Ovary (tissue), 10 donors: ENCODE measurements at regions of chr1 and their contacts with region 1.

Region 1: DNA sequence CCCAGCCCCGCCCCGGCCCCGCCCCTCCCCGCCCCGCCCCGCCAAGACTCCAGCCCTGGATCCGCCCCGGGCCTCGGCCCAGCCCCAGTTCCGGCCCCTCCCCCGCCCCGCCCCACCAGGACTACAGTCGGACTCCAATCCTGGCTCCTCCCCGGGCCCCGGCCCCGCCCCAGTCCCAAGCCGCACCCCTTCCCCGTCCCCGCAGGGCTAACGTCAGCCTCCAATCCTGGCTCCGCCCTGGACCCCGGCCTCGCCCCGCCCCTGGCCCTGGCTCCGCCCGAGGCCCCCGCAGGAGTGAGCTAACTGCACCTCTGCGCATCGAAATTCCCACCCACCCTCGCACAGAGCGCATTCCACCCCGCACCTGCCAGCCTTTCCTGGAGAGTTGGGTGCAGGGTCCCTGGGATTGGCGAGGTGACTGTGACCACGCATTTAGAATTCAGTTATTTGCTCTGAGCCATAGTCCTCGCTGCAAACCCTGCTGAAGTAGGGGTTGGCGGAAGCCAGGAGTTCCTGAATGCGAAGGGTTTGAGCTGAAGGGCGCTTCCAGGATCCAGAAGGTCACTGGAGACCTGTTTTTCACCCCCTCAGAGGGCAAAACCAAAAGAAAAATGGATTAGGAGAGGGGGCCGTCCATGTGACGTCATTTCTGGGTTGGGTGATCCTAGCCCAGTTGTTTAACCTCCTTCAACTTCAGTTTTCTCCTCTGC is 588 bp upstream of the IGSF8 start:
- DNase-seq: peak; percentile 98 to 99 (median 99)
- H3K4me3 ChIP-seq: peak overlapping the region; percentile 52
- H3K27ac ChIP-seq: peak overlapping the region; percentile 67 to 79
- H3K4me1 ChIP-seq: peaks cover 17% of the 10 kb centered on the region
- H3K27me3 ChIP-seq: no peaks in the 10 kb centered on the region
- CTCF ChIP-seq: no peak
- EP300 ChIP-seq: no peak
- POLR2A ChIP-seq: peak; percentile 71

Region 2: DNA sequence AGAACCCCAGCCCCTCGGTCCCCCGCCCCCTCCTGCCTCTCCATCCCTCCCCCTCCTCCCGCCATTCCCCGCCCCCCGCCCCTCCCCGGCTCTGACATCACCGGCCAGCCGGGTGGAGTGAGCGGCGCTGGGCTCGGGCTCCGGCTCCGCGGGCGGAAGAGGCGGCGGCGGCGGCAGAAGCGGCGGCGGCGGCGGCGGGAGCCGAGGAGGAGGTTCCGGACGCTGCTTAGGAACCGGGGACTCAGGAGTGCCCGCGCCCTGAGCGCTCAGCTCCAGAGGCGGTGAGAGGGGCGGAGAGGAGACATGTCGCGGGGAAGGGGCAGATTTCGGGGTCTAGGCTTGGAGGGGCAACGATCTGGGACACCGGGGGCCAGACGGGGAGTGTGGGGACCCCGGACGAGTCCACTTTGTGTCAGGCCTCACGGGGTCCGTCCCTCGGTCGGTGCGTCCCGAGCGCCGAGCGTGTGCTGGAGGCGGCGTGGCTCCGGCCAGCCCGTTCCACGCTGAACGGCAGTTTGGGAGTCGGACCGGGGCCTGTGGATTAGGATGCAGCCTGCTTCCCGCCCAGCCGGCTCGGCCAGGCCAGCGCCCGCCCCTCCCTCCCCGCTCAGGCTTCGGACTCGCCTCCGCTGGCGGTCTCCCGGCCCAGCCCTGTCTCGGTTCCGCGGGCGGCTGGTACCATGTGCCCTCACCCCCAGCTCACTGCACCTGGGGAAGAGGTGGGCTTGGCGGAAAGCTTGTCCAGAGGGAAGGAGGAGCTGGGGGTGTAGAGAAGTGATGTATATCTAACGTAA is 106.4 kb after region 1 on chr1 and contains the start of gene PEA15:
- intact Hi-C with region 1: loop called in 2 of 4 experiments (anchors 5 kb)
- DNase-seq: peak; percentile 79 to 88 (median 84)
- H3K4me3 ChIP-seq: peak within 1 kb of the TSS; percentile 92
- H3K27ac ChIP-seq: peak within 1 kb of the TSS; percentile 43 to 83
- H3K4me1 ChIP-seq: peaks cover 16% of the 10 kb centered on the region
- H3K27me3 ChIP-seq: no peaks in the 10 kb centered on the region
- CTCF ChIP-seq: no peak
- EP300 ChIP-seq: no peak
- POLR2A ChIP-seq: peak; percentile 80
- total RNA-seq, gene PEA15: 38.4 to 137 (median 135) TPM

Region 3: GRCh38 chr1:160219062-160219929 is 120.3 kb after region 1 on chr1:
- intact Hi-C with region 1: loop called in 1 of 4 experiments (anchors 5 kb)
- DNase-seq: peak in 4 of 5 donors; percentile 40 to 62 (median 56)
- H3K4me3 ChIP-seq: no peak overlapping the region
- H3K27ac ChIP-seq: peak overlapping the region in 1 of 2 donors; percentile 26
- H3K4me1 ChIP-seq: peaks cover 2% of the 10 kb centered on the region
- H3K27me3 ChIP-seq: no peaks in the 10 kb centered on the region
- CTCF ChIP-seq: peak; percentile 12 to 50 (median 33)
- EP300 ChIP-seq: no peak
- POLR2A ChIP-seq: no peak

Region 4: DNA sequence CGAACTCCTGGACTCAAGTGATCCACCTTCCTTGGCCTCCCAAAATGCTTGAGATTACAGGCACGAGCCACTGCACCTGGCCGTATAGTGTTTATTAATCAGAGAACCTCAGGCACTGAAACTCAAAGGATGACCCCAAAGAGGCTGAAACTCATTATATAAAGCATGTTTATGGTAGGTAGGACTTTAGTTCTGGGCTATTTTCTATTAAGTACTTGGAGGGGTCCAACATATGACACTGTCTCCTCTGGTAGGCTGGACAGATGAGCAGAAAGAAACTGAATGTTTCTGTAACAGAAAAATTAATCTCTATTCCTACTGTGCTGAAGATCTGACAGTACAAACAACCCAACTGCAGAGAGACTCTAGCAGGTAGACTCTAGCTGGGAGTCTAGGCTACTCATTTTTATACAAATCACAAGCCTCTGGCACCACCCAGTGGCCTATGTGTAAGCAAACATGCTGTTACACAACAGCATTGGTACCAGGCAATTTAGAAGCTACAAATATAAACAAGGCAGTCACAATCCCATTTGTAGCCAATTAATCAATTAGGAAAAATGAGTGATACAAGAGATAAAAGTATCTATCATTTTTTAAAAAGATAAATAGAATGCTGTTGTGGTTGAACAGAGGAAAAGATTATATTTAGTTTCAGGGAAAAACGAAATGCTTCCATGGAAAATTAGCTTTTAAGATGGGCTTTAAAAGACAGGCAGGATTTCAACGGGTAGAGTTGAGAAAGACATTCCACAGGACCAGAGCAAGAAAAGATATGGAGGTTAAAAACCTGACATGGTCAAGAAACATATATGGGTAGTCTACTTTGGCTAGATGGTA is 152.9 kb after region 1 on chr1:
- intact Hi-C with region 1: loop called in 2 of 4 experiments (anchors 10 kb)
- DNase-seq: peak; percentile 56 to 81 (median 64)
- H3K4me3 ChIP-seq: no peak overlapping the region
- H3K27ac ChIP-seq: no peak overlapping the region
- H3K4me1 ChIP-seq: peaks cover 1% of the 10 kb centered on the region
- H3K27me3 ChIP-seq: no peaks in the 10 kb centered on the region
- CTCF ChIP-seq: peak in 2 of 3 donors; percentile 67 to 80
- EP300 ChIP-seq: no peak
- POLR2A ChIP-seq: no peak

Region 5: DNA sequence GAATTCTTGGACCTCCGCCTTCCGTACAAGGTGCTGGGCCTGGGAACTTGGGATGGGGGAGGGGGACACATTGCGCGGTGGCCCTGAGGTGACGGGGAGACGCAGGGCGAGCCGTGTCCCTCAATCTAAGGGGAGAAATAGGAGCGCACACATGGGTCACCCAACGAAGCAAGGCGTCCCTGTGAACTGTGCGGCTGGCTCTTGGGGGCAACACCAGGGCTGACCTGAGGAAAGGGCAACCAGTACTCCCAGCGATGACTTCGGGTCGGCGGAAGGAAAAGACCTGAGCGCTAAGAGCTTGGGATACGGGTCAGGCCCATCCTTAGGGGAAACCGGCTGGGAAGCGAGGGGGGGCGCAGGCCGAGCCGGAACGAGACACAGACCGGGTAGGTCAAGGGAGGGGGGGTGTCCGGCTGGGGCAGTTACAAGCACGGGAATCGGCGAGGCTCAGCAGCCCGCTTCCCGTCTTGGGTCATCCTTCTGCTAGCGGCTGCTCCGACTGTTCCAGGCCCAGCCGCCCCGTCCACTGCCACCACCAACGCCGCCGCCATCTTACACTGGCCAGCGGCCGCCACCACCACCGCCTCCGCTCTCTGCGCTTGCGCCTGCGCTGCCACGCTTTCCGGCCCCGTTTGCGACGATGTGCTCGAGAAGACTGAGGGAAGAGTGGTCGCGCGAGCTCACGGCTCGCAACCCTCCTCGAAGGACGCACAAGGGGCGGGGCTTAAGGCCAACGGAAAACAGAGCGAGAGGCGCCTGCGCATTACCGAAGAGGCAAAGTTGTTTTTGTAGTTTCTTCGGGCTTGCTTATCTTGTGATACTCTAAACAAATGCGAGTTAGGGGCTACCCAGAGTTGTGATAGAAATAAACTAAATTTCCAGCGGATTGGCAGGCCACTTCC is 163.1 kb after region 1 on chr1 and contains the start of gene DCAF8:
- intact Hi-C with region 1: loop called in 3 of 4 experiments (anchors 5 to 10 kb)
- DNase-seq: peak; percentile 98 to 99 (median 99)
- H3K4me3 ChIP-seq: peak within 1 kb of the TSS; percentile 91
- H3K27ac ChIP-seq: peak within 1 kb of the TSS; percentile 91 to 93
- H3K4me1 ChIP-seq: peaks cover 8% of the 10 kb centered on the region
- H3K27me3 ChIP-seq: no peaks in the 10 kb centered on the region
- CTCF ChIP-seq: no peak
- EP300 ChIP-seq: no peak
- POLR2A ChIP-seq: peak; percentile 95
- total RNA-seq, gene DCAF8: 85.2 to 133 (median 104) TPM

Region 6: GRCh38 chr1:161389691-161390558 is 1290.9 kb after region 1 on chr1:
- intact Hi-C with region 1: loop called in 1 of 4 experiments (anchors 5 kb)
- DNase-seq: peak; percentile 98 to 99 (median 99)
- H3K4me3 ChIP-seq: peak overlapping the region; percentile 77
- H3K27ac ChIP-seq: peak overlapping the region; percentile 63 to 82
- H3K4me1 ChIP-seq: no peaks in the 10 kb centered on the region
- H3K27me3 ChIP-seq: no peaks in the 10 kb centered on the region
- CTCF ChIP-seq: no peak
- EP300 ChIP-seq: peak; percentile 100
- POLR2A ChIP-seq: peak; percentile 99